AG04449 (cell line): ENCODE measurements at regions of chr11 and their contacts with region 1.

Region 1: DNA sequence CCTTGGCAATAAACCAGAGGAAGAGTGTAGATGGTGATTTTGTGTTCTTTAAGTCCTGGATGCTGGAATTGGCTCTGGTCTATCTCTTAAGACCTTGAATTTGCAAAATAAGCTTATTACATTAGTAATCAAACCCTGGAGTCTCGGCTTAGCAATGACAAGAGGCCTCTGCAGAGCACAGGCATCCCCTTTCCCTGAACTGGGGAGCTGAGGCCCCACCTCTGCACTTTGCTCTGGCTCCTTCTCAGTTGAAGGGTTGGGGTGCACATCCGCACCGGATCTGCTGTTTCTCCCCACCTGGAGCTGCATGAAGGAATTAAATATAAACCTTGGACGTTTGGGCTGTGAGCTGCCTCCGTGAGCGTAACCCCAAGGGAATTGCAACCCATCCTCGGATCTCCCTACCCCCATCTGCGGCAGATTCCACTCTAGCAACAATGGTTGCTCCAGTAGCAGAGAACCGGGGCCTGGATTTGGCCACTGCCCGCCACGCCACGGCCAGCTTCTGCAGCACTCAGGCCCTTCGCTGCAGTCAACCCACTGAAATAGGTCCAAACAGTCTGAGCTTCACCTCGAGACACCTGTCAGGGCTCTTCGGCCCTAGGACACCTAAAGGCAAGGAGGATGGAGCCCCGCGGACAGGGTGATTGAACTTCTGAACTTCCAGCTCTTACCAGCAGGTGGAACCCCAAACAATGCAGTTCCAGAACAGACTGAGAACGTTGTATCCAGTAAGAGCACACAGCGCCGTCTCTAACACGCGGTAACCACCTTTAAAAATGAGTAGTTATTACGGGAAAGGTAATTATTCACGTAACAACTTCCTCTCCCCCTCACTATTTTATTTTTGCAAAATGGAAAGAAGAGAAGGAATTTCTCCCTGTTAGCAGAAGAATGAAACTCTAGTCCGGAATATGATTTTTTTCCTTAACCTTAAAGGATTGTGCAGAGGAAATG is 54.8 kb upstream of the CAPRIN1 start:
- DNase-seq: no peak
- H3K4me3 ChIP-seq: no peak overlapping the region
- CTCF ChIP-seq: peak; percentile 76

Region 2: DNA sequence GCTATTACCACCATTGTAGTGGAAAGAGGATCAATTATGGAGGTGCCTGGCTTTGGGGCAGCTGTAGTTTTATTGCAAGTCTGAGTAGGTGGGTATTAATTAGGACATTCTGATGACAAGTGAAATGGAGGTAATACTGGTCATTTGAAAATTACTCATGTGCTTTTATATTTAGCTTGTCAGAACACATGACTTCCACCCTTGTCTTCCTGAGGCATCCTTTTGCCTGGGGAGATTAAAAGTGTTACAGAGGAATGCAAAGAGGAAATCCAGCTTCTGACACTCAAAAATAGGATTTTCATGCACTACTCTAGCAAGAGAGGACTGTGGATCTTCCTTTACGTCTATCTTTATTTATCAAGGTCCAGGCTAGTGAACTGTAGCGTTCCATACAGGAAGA is 10.1 kb after region 1 on chr11:
- CTCF ChIA-PET with region 1: interaction called, 31 read pairs
- POLR2A ChIA-PET with region 1: no interaction called
- DNase-seq: no peak
- H3K4me3 ChIP-seq: no peak overlapping the region
- CTCF ChIP-seq: no peak

Region 3: DNA sequence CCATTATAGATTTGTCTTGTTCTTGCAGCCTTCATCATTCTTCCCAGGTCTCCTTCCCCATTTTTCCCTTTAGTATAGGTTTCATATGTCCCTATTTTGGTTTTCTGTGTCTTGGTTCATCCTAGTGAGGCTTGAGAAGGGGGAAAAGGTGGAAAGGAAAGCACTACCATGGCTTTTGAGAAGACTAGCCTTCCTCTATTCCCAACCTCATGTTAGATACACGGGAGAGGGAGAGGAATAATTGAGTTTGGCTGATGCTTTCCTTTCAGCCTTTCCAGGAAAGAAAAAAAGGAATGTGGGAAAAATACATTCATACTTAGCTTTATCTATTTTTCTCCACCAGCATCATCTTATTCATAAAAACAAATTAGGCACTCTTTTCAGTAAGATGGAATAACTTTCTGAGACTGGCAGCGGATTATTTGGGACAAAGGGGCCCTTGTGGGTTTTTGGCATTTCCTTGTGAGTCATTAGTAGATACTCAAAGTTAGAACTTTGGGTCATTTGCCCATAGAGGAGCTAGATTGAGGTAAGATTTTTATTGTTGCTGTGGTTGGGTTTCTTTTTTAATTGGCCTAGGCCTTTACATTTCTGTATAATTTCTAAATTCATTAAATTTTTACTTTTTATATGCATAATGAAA is 78.5 kb after region 1 on chr11:
- CTCF ChIA-PET with region 1: interaction called, 24 read pairs
- POLR2A ChIA-PET with region 1: no interaction called
- DNase-seq: no peak
- H3K4me3 ChIP-seq: no peak overlapping the region
- CTCF ChIP-seq: no peak

Region 4: DNA sequence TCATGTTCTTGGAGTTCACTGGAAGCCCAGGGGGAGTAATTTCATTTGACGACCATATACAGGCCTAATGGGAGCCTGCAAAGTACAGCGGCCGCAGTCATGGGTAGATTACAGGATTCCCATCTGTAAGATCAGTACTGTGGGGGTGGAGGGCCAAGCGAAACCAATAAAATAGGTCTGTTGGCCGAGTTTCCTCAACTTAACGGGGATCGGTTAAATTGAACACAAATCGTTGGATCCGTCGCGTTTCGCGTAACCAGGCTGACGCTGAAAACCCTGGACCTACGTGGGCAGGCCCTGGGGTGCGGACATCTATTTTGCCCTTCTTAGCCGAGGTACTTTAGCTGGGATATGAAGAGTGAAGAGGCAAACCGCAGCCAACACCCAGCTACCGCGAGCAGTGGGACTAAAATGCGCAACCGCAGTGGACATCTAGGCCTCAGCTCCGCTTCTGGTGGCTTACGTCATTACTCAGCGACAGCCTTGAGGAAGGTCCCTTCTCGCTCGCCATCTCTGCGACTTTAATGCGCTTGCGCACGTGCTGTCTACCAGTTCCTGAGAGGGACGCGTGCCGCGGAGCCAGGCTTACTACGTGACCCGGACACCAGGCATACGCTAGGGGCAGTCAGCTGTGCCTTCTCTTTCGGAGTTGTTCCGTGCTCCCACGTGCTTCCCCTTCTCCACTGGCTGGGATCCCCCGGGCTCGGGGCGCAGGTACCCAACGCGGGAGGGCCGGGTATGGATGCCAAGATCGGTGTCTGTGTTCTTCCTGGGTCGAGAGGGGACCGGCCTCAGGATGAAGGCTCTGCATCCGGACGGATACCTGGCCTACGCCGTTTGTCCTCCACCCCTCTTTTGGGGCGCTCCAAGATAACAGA is 108.5 kb after region 1 on chr11 and contains the start of gene NAT10:
- CTCF ChIA-PET with region 1: interaction called, 22 read pairs
- POLR2A ChIA-PET with region 1: no interaction called
- DNase-seq: peak; percentile 94
- H3K4me3 ChIP-seq: peak within 1 kb of the TSS; percentile 90
- CTCF ChIP-seq: no peak

Region 5: GRCh38 chr11:34357701-34358257 is 361.0 kb after region 1 on chr11 and contains the start of gene ABTB2:
- CTCF ChIA-PET with region 1: interaction called, 17 read pairs
- POLR2A ChIA-PET with region 1: no interaction called
- DNase-seq: peak; percentile 72
- H3K4me3 ChIP-seq: peak within 1 kb of the TSS; percentile 56
- CTCF ChIP-seq: no peak